ENCODE measurements at regions of chr6 and their contacts with region 1.

Region 1: DNA sequence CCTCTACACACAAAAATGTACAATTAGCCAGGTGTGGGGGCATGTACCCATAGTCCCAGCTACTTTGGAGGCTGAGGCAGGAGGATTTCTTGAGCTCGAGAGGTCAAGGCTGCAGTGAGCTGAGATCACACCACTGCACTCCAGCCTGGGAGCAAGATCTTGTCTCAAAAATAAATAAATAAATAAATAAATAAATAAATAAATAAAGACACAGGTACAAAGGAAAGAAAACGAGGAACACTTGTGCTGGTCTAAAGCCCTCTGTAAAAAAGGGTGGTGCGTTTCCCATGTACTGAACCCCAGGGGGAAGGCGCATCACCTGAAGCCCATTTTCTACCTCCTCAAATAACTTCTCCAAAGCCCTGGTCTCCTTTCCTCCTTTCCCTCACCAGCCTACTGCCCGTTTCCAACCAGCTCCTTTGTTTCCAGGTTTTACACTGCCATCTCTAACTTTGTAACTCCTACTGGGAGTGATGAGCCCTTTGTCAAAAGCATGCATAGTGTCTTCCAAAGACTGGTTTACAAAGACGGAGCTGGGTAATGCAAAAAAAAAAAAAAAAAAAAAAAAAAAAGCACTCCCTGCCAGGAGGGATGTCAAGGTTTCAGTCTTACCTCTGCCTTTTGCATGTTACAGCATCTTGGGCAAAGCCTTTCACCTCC is 81.5 kb upstream of the SOX4 start:
- DNase-seq: no peak
- ATAC-seq: no peak
- H3K4me3 ChIP-seq: no peak overlapping the region
- H3K4me3 Mint-ChIP-seq: no peak overlapping the region
- H3K27ac ChIP-seq: no peak overlapping the region
- H3K27ac Mint-ChIP-seq: no peak overlapping the region
- H3K4me1 ChIP-seq: no peaks in the 10 kb centered on the region
- H3K4me1 Mint-ChIP-seq: no peaks in the 10 kb centered on the region
- H3K27me3 ChIP-seq: no peaks in the 10 kb centered on the region
- H3K27me3 Mint-ChIP-seq: peaks cover 3 to 7% of the 10 kb centered on the region in 2 donors

Region 2: DNA sequence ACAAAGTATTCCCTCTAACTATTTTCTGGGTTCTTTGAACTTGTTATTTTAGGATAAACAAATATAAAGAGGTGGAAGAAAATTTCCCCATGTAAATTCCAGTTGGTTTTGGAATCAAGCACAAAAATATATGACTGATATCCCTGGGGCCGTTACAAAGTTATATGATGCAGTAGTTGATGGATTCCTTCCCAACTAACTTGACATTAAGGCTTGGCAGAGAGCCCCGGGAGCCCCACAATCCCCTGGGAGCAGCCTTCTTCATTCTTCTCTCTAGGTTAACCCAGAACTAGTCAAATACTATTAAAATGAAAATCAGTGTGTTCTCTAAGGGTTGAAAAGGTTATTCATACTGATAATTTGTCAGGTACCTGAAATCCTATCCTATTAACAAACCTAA is 427.4 kb before region 1 on chr6:
- CTCF ChIA-PET with region 1: no interaction called
- POLR2A ChIA-PET with region 1: no interaction called
- DNase-seq: no peak
- ATAC-seq: no peak
- H3K4me3 ChIP-seq: no peak overlapping the region
- H3K4me3 Mint-ChIP-seq: no peak overlapping the region
- H3K27ac ChIP-seq: no peak overlapping the region
- H3K27ac Mint-ChIP-seq: no peak overlapping the region
- H3K4me1 ChIP-seq: no peaks in the 10 kb centered on the region
- H3K4me1 Mint-ChIP-seq: no peaks in the 10 kb centered on the region
- H3K27me3 ChIP-seq: no peaks in the 10 kb centered on the region
- H3K27me3 Mint-ChIP-seq: no peaks in the 10 kb centered on the region

Region 3: GRCh38 chr6:21263531-21264287 is 248.3 kb before region 1 on chr6:
- CTCF ChIA-PET with region 1: interaction called in 1 of 2 experiments, 12 read pairs
- POLR2A ChIA-PET with region 1: no interaction called
- DNase-seq: no peak
- ATAC-seq: no peak
- H3K4me3 ChIP-seq: no peak overlapping the region
- H3K4me3 Mint-ChIP-seq: no peak overlapping the region
- H3K27ac ChIP-seq: no peak overlapping the region
- H3K27ac Mint-ChIP-seq: no peak overlapping the region
- H3K4me1 ChIP-seq: no peaks in the 10 kb centered on the region
- H3K4me1 Mint-ChIP-seq: no peaks in the 10 kb centered on the region
- H3K27me3 ChIP-seq: peaks cover 0 to 11% of the 10 kb centered on the region in 2 experiments
- H3K27me3 Mint-ChIP-seq: peaks cover 3 to 8% of the 10 kb centered on the region in 2 donors

Measured in T-cell (primary cell).